ENCODE measurements at regions of chr5 and their contacts with region 1.

Region 1: GRCh38 chr5:72366324-72366976 is 46.3 kb downstream of the PTCD2 start:
- ATAC-seq: peak; percentile 41 to 85 (median 68)
- H3K4me3 ChIP-seq: no peak overlapping the region
- H3K27ac ChIP-seq: no peak overlapping the region
- H3K4me1 ChIP-seq: peaks cover 0 to 12% of the 10 kb centered on the region in 2 donors

Region 2: GRCh38 chr5:72244862-72245371 is 121.5 kb before region 1 on chr5:
- in situ Hi-C with region 1: no loop called
- ATAC-seq: peak; percentile 41 to 86 (median 52)
- H3K4me3 ChIP-seq: no peak overlapping the region
- H3K27ac ChIP-seq: no peak overlapping the region
- H3K4me1 ChIP-seq: peaks cover 39 to 52% of the 10 kb centered on the region in 2 donors

Region 3: GRCh38 chr5:72523960-72524582 is 157.6 kb after region 1 on chr5:
- in situ Hi-C with region 1: loop called in 4 of 9 experiments (anchors 25 kb)
- ATAC-seq: peak in 4 of 8 experiments; percentile 42 to 84 (median 76)
- H3K4me3 ChIP-seq: no peak overlapping the region
- H3K27ac ChIP-seq: no peak overlapping the region
- H3K4me1 ChIP-seq: no peaks in the 10 kb centered on the region

Region 4: DNA sequence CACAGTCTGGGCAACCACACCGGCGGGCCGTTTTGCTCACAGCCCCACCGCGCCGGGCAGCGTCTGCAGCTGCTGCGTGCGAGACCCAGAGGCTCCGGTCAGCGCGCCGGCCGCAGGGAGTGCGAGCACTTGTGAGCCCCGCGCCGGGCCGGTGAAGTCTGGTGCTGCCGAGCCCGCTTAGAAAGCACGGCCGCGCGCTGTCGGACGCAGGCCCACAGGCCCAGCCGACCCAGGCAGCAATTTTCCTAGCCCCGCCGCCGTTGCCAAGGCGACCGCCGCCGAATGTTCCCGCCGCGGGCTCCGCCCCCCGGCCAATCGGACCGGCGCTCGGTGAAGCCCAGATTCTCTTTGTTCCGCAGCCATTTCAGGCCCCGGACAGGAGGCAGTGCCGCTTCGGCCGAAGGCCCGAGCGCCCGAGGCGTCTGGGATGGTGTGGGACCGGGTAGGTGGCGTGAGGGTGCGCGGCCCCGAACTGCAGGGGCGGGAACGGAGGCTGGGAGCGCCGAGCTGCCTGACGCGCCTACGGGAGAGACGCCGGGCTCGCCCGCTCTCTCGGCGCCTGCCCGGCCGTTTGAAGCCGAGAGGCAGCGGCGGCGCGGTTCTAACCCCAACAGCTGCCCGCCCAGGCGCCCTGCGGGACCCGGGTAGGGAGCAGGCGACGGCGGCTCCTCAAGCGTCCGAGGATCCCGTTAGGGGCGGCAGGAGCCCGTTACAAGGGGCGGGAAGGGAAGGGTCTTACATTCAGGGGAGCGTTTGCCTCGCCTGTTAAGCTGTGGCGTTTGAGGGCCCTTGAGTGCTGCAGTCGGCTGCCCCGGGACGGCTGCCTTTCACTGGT is 450.1 kb after region 1 on chr5 and contains the start of gene TNPO1:
- in situ Hi-C with region 1: loop called in 2 of 9 experiments (anchors 25 kb)
- ATAC-seq: peak; percentile 88 to 91 (median 90)
- H3K4me3 ChIP-seq: peak within 1 kb of the TSS; percentile 59 to 91 (median 76)
- H3K27ac ChIP-seq: peak within 1 kb of the TSS; percentile 92 to 97
- H3K4me1 ChIP-seq: peaks cover 5 to 12% of the 10 kb centered on the region in 2 donors
- total RNA-seq, gene TNPO1: 89.3 to 122 (median 100.0) TPM

Region 5: GRCh38 chr5:72847989-72848473 is 481.6 kb after region 1 on chr5:
- in situ Hi-C with region 1: loop called in 3 of 9 experiments (anchors 25 kb)
- ATAC-seq: peak; percentile 75 to 87 (median 80)
- H3K4me3 ChIP-seq: peak overlapping the region; percentile 68 to 89 (median 72)
- H3K27ac ChIP-seq: peak overlapping the region; percentile 87 to 93
- H3K4me1 ChIP-seq: peaks cover 3 to 32% of the 10 kb centered on the region in 2 donors

Region 6: GRCh38 chr5:72860499-72860898 is 494.0 kb after region 1 on chr5:
- in situ Hi-C with region 1: loop called in 1 of 9 experiments (anchors 25 kb)
- ATAC-seq: peak in 1 of 8 experiments; percentile 59
- H3K4me3 ChIP-seq: no peak overlapping the region
- H3K27ac ChIP-seq: no peak overlapping the region
- H3K4me1 ChIP-seq: no peaks in the 10 kb centered on the region

Measured in motor neuron (in vitro differentiated cells).